ENCODE measurements at regions of chr6 and their contacts with region 1.

Region 1: DNA sequence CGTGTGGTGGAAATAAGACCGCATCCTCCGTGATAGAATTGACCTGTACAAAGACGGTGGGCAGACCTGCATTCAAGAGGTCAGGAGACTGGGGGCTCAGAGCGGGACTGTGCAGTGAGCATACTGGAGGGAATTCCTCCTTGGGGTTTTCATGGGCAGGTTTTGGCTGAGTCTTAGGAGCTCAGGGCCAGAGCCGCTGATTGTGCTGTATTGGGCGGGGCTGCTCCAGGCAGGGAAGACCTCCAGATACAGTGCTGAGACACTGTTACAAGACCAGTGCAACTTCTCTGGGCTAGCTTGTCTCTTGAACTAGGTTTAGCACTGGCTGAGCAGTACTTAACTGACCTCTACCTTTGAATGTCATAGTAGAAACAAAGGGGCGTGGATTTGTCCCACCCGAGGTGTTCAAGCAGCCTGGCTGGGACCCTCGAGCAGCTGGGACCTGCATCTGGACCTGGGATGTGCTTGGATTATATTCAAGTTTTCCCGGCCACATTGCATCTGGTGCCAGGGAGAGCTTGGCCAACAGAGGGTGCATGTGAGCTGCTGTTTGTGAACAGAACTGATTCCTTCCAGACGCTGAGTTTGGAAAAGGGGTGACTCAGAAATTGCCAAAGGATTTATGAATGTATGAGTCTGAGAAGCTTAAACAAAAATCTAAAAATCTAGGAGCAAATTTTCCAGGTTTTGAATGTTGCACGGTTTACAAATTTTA is 33.4 kb upstream of the SLC22A1 start:
- DNase-seq: peak; percentile 73
- H3K4me3 ChIP-seq: no peak overlapping the region
- H3K27me3 ChIP-seq: no peaks in the 10 kb centered on the region
- CTCF ChIP-seq: peak; percentile 95

Region 2: GRCh38 chr6:160071800-160072690 is 16.2 kb before region 1 on chr6:
- CTCF ChIA-PET with region 1: interaction called, 45 read pairs
- POLR2A ChIA-PET with region 1: no interaction called
- DNase-seq: no peak
- H3K4me3 ChIP-seq: no peak overlapping the region
- H3K27me3 ChIP-seq: no peaks in the 10 kb centered on the region
- CTCF ChIP-seq: peak; percentile 22; the same call in 1 of the 2 replicates

Region 3: DNA sequence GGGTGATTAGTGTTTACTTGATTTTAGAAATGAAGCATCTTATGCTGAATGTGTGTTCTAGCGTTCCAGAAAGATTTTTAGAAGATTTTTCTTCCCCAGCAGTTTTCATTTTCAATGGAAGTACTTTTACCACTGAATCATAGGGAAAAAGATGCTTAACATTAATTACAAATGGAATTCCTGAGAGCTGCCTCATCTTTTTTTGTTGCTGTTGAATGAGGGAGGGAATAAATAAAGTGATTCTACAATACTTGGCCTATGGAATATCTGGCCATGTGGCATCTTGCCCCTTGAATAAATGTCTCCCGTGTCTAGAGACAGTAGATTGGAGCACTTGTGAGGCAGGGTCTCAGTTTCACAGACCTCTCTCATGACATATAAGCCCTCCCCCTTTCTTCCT is 10.7 kb before region 1 on chr6:
- CTCF ChIA-PET with region 1: interaction called, 45 read pairs
- POLR2A ChIA-PET with region 1: no interaction called
- DNase-seq: peak; percentile 25
- H3K4me3 ChIP-seq: no peak overlapping the region
- H3K27me3 ChIP-seq: no peaks in the 10 kb centered on the region
- CTCF ChIP-seq: no peak

Region 4: GRCh38 chr6:160102956-160103824 is 15.0 kb after region 1 on chr6:
- CTCF ChIA-PET with region 1: interaction called, 19 read pairs
- POLR2A ChIA-PET with region 1: no interaction called
- DNase-seq: no peak
- H3K4me3 ChIP-seq: no peak overlapping the region
- H3K27me3 ChIP-seq: no peaks in the 10 kb centered on the region
- CTCF ChIP-seq: peak; percentile 50

Region 5: DNA sequence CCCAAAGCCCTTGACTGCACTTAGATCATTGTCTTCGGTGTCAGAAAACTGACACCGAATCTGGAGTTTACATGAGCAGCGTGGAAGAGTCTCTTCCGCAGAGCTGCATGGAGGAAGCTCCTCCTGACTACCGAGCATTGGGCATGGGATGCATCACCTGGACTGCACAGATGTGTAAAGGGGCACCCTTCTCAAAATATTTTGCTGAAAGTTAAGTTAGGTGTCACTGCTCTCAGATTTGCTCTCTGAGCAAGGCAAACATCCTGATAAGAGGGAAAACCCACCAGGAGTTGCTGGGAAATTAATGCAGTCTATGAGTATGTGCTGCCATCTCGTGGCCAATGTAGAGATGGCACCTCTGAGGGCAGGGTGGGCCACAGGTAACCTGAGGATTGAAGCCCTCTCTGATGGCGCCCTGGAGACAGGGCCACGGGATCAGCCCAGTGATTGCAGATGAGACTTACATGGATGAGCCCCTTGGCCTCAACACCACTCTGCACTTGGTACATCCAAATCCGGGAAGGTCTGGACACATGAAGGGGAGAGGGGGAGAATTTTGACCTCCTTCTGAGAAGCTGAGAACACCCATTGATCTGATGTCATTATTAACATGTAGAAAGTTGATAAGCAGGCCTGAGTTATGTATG is 445.9 kb after region 1 on chr6:
- CTCF ChIA-PET with region 1: interaction called, 13 read pairs
- POLR2A ChIA-PET with region 1: no interaction called
- DNase-seq: no peak
- H3K4me3 ChIP-seq: no peak overlapping the region
- H3K27me3 ChIP-seq: no peaks in the 10 kb centered on the region
- CTCF ChIP-seq: peak; percentile 89